AG04449 (cell line): ENCODE measurements at regions of chr20 and their contacts with region 1.

Region 1: DNA sequence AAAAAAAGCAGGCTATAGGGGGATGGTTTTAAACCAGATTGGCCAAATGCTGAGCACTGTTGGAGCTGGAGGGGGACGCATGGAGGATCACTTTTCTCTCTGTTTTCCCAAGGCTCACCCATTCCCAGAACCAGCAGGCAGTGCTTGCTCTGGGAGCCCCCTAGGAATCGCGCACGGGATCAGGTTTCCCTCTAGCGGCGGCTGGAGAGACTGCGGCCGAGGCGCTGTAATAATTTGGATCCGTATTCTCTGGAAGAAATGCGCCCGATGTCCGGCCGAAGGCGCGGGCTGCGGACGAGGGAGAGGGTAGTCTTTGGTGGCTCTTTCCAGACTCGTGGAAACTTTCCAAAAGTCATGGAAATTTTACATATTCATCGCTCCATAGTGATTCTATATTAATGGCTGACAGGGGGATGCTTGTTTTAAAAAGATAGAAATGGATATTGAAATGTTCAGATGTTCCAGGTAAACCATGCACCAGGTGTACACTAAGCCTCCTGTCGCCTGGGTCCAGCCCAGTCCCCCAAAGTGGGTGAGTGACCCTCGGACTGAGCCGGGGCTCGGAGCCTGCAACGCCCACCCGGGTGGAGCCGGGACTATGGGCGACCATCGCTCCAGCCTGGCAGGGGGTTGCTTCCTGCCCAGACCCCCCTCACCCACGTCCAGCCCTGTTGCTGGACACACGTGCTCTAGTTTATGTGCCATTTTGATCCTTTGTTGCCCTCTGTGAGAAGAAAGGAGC is 78.7 kb upstream of the PHACTR3 start:
- DNase-seq: no peak
- H3K4me3 ChIP-seq: no peak overlapping the region
- CTCF ChIP-seq: peak; percentile 89

Region 2: GRCh38 chr20:59515014-59515905 is 10.4 kb before region 1 on chr20:
- CTCF ChIA-PET with region 1: interaction called, 92 read pairs
- POLR2A ChIA-PET with region 1: interaction called, 3 read pairs
- DNase-seq: no peak
- H3K4me3 ChIP-seq: no peak overlapping the region
- CTCF ChIP-seq: peak; percentile 86

Region 3: DNA sequence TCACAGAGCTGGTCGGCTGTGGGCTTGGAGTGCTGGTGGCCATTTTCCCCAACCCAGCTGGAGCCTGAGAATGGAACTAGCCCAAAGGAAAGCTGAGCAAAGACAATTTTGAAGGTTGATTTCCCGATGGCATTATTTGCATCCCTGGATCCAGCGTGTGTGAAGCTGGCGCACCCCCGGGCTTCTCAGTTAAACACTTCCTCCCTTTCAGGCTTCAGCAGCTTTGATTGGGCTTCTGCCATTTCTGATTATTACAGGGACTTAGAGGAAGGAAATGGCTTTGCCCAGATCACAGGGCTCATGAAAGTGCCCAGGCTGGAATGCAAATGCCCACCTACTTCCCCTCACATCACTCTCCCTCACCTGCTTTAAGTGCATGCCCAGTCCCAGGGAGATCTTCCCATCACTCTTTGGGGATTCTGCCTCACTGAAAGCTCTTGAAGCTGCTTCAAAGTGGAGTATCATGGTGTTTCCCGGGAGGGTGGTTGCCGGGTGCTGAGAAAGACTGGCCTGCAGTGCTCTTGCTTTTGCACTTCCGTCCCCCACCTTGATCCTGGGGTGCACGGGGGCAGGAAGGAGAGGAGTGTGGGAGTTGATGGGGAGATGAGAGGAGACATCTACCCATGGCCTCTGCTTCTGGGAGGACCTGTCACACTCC is 106.9 kb after region 1 on chr20:
- CTCF ChIA-PET with region 1: no interaction called
- POLR2A ChIA-PET with region 1: no interaction called
- DNase-seq: no peak
- H3K4me3 ChIP-seq: no peak overlapping the region
- CTCF ChIP-seq: no peak